AG04449 (cell line): ENCODE measurements at regions of chr1 and their contacts with region 1.

Region 1: GRCh38 chr1:222557148-222557547 is 9.2 kb upstream of the HHIPL2 start:
- DNase-seq: no peak
- H3K4me3 ChIP-seq: no peak overlapping the region
- CTCF ChIP-seq: no peak

Region 2: DNA sequence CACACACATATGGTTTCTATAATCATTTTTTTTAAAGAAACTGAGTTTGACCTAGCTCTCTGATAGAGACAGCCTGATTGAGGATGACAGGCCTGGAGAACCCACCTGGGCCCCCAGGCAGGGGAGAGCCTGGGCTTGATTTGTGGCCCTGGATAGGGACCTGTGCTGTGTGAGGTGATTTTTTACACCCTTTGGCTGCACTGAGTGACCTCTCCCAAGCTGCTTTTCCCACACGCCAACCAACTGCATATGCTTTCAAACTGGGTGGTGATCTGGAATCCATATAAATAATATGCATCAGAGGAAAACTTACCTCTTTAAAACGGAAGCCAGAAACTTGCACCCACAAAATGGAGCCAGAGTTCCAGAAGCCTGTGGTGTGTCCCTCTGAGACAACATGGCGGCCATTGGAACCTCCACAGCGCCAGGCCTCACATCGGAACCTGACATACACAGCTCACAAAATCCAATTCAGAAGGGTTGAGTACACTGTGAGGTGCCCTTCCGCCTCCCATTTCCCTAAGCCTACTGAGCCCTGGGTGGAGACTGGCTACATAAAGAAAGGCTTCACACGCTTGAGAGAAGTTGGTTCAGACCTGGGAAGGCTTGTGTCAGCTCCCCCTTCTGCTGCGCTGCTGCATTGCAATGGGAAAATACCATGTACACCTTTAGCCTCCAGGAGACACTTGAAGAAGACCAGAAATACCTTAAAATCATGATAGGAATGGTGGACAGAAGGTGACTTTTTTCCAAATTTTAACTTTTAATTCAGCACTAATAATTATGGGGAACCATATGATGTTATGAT is 169.9 kb before region 1 on chr1:
- CTCF ChIA-PET with region 1: no interaction called
- POLR2A ChIA-PET with region 1: no interaction called
- DNase-seq: no peak
- H3K4me3 ChIP-seq: no peak overlapping the region
- CTCF ChIP-seq: peak; percentile 19

Region 3: GRCh38 chr1:222546548-222547259 is 10.4 kb before region 1 on chr1:
- CTCF ChIA-PET with region 1: interaction called, 11 read pairs
- POLR2A ChIA-PET with region 1: no interaction called
- DNase-seq: peak; percentile 45
- H3K4me3 ChIP-seq: peak overlapping the region; percentile 40
- CTCF ChIP-seq: peak; percentile 10